ENCODE measurements at regions of chr19 and their contacts with region 1.

Region 1: GRCh38 chr19:51367565-51368365 is 1.0 kb downstream of the CLDND2 start:
- DNase-seq: peak; percentile 96 to 98
- ATAC-seq: peak; percentile 64 to 71
- H3K4me3 ChIP-seq: peak overlapping the region; percentile 88 to 95 (median 92)
- H3K27ac ChIP-seq: peak overlapping the region; percentile 91 to 98 (median 94)
- H3K4me1 ChIP-seq: peaks cover 8 to 19% of the 10 kb centered on the region in 2 donors
- H3K27me3 ChIP-seq: no peaks in the 10 kb centered on the region
- CTCF ChIP-seq: no peak
- POLR2A ChIP-seq: no peak

Region 2: GRCh38 chr19:49766007-49766937 is 1601.5 kb before region 1 on chr19:
- in situ Hi-C with region 1: no loop called
- intact Hi-C with region 1: loop called (anchors 5 kb)
- DNase-seq: peak; percentile 100
- ATAC-seq: peak; percentile 87 to 92
- H3K4me3 ChIP-seq: peak overlapping the region; percentile 48 to 97 (median 74)
- H3K27ac ChIP-seq: peak overlapping the region; percentile 91 to 98 (median 96)
- H3K4me1 ChIP-seq: peaks cover 19 to 22% of the 10 kb centered on the region in 2 donors
- H3K27me3 ChIP-seq: no peaks in the 10 kb centered on the region
- CTCF ChIP-seq: no peak
- POLR2A ChIP-seq: peak; percentile 71 to 75

Region 3: DNA sequence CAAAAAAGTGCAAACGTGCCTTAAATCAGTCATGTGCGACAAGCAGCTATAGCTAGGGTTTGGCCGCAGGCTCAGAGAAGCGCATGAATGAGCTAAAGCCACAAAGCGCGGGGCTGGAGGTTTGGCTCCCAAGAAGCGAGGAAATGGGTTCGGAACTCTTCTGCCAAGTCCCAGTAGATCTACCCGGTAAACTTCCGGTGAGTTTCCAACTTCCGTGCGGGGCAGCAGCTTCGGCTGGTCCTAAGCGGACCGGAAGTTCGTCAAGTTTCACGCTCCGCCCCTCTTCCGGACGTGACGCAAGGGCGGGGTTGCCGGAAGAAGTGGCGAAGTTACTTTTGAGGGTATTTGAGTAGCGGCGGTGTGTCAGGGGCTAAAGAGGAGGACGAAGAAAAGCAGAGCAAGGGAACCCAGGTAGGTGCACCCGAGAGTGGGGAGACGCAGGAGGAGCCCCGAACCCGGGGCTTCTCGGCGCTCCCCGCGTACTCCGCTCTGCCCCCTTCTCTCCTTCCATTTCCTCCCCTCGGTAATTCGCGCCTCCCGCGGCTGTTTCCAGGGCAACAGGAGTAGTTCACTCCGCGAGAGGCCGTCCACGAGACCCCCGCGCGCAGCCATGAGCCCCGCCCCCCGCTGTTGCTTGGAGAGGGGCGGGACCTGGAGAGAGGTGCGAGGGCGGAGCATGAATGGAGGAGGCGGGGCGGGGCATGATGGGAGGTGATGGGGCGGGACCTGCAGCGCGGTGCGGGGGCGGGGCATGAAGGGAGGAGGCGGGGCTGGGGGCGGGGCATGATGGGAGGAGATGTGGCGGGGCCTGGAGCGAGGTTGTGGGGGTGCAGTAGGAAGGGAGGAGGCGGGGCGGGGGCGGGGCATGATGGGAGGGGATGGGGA is 991.4 kb before region 1 on chr19 and contains the start of gene NR1H2:
- in situ Hi-C with region 1: no loop called
- intact Hi-C with region 1: loop called (anchors 5 kb)
- DNase-seq: peak; percentile 93 to 94
- ATAC-seq: peak; percentile 98
- H3K4me3 ChIP-seq: peak within 1 kb of the TSS; percentile 71 to 99 (median 96)
- H3K27ac ChIP-seq: peak within 1 kb of the TSS; percentile 95 to 100 (median 99)
- H3K4me1 ChIP-seq: peaks cover 8 to 12% of the 10 kb centered on the region in 2 donors
- H3K27me3 ChIP-seq: no peaks in the 10 kb centered on the region
- CTCF ChIP-seq: no peak
- POLR2A ChIP-seq: peak; percentile 76 to 83
- total RNA-seq, gene NR1H2: 155 to 232 (median 200) TPM

Region 4: GRCh38 chr19:50804420-50805272 is 563.1 kb before region 1 on chr19:
- in situ Hi-C with region 1: no loop called
- intact Hi-C with region 1: loop called (anchors 2 kb)
- DNase-seq: peak; percentile 96 to 98
- ATAC-seq: peak; percentile 98
- H3K4me3 ChIP-seq: peak overlapping the region; percentile 82 to 100 (median 84)
- H3K27ac ChIP-seq: peak overlapping the region; percentile 92 to 100 (median 94)
- H3K4me1 ChIP-seq: peaks cover 15 to 23% of the 10 kb centered on the region in 2 donors
- H3K27me3 ChIP-seq: no peaks in the 10 kb centered on the region
- CTCF ChIP-seq: peak in 1 of 5 experiments; percentile 16
- POLR2A ChIP-seq: peak; percentile 56 to 60

Region 5: DNA sequence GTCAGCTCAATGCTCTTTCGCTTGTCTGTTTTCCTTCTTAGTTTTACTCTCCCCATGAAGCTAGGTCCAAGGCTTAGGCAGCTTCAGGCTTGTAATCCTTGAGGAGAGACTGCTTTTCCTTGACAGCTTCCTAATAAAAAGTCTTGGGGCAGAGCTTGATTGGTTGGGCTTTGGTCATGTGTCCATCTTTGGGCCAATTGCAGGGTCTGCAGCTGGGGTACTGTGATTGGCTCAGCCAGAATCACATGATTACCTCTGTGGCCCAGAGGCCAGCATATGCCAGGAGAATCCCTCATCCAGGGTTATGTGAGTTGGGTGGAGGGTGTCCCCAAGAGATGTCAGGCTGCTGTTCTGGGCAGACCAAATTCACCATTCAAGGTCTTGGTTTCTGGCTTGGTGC is 552.3 kb before region 1 on chr19:
- in situ Hi-C with region 1: no loop called
- intact Hi-C with region 1: no loop called
- DNase-seq: no peak
- ATAC-seq: no peak
- H3K4me3 ChIP-seq: no peak overlapping the region
- H3K27ac ChIP-seq: no peak overlapping the region
- H3K4me1 ChIP-seq: no peaks in the 10 kb centered on the region
- H3K27me3 ChIP-seq: peaks cover 23 to 36% (median 35%) of the 10 kb centered on the region in 3 donors
- CTCF ChIP-seq: no peak
- POLR2A ChIP-seq: no peak

Region 6: DNA sequence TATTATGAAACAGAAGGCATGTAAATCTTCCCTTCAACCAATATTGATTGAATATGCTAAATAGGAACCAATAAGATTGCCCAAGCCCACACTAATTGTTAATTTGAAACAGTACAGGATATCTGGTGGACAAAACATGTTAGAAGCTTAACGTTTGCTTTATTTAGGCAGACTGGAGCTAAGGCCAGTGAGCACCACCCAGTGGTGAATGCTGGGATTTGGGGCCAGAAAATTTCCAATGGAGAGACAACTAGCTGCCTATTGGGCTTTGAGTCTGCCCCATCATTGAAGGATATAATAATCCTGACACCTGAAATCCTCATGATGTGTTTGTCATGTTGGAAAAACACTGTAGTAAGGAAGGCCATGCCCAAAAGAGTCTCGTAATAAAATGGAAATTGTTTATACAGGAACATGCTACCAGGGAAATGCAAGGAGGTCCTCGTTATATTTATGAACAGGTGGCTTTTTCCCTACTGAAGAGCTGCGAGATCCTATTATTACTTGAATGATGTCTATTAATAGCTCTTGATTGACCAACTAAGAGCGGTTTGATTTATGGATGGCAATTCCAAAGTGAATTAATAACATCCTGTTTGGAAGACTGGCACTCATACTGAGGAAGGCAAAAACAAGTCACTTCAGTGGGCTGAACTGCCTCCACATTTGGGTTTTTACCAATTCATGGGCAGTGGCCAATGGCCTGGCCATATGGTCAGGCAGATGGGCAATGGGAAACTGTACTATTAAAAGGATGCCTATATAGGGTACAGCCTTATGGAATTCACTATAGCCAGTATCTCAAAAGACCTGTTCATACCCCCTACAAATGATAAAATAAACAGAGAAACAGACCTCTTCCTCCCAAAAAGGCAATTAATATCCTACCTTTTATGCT is 108.2 kb before region 1 on chr19:
- in situ Hi-C with region 1: no loop called
- intact Hi-C with region 1: no loop called
- DNase-seq: no peak
- ATAC-seq: no peak
- H3K4me3 ChIP-seq: no peak overlapping the region
- H3K27ac ChIP-seq: no peak overlapping the region
- H3K4me1 ChIP-seq: no peaks in the 10 kb centered on the region
- H3K27me3 ChIP-seq: no peaks in the 10 kb centered on the region
- CTCF ChIP-seq: no peak
- POLR2A ChIP-seq: no peak

Region 7: DNA sequence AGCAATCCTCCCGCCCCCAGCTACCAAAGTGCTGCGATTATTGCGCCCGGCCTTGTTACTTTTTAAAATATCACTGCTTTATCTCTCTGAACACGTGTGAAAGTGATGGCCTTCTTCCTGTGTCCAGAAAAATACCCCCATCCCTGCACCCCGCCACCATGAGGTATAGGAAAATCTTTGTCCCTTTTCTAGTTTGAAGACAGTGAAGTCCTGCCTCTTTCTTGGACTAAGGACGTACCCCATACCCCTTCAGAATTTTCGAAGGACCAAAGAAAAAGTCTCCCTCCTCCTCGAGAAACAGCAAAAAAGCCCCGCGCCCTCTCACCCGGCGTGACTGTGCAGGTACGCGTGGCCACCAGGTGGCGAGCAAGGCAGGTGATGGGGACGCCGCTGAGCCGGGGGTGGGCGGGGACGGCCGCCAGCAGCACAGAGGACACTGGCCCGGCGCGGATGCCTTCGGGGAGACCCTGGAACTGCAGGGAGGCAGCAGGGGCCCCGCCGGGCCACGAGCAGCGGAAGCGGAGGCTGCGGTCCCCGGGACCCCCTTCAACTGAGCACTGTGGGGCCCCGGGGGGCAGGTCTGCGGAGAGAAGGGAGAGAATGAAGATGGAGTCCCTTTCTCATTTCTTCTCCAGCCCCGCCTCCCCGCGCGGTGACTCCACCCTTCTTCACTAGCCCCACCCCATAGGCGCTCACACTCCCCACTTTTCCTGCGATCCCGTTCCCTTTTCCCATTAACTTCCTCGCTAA is 29.0 kb before region 1 on chr19:
- in situ Hi-C with region 1: no loop called
- intact Hi-C with region 1: loop called (anchors 1 kb)
- DNase-seq: peak; percentile 36 to 48
- ATAC-seq: peak; percentile 47 to 54
- H3K4me3 ChIP-seq: peak overlapping the region; percentile 49 to 60 (median 55)
- H3K27ac ChIP-seq: peak overlapping the region in 2 of 4 donors; percentile 39 to 59
- H3K4me1 ChIP-seq: peaks cover 4 to 17% of the 10 kb centered on the region in 2 donors
- H3K27me3 ChIP-seq: peaks cover 0 to 9% (median 0%) of the 10 kb centered on the region in 3 donors
- CTCF ChIP-seq: peak; percentile 45 to 92 (median 85)
- POLR2A ChIP-seq: no peak

Region 8: GRCh38 chr19:51439021-51439465 is 71.3 kb after region 1 on chr19:
- in situ Hi-C with region 1: no loop called
- intact Hi-C with region 1: no loop called
- DNase-seq: no peak
- ATAC-seq: no peak
- H3K4me3 ChIP-seq: no peak overlapping the region
- H3K27ac ChIP-seq: no peak overlapping the region
- H3K4me1 ChIP-seq: no peaks in the 10 kb centered on the region
- H3K27me3 ChIP-seq: peaks cover 0 to 6% (median 2%) of the 10 kb centered on the region in 3 donors
- CTCF ChIP-seq: no peak
- POLR2A ChIP-seq: no peak

Region 9: DNA sequence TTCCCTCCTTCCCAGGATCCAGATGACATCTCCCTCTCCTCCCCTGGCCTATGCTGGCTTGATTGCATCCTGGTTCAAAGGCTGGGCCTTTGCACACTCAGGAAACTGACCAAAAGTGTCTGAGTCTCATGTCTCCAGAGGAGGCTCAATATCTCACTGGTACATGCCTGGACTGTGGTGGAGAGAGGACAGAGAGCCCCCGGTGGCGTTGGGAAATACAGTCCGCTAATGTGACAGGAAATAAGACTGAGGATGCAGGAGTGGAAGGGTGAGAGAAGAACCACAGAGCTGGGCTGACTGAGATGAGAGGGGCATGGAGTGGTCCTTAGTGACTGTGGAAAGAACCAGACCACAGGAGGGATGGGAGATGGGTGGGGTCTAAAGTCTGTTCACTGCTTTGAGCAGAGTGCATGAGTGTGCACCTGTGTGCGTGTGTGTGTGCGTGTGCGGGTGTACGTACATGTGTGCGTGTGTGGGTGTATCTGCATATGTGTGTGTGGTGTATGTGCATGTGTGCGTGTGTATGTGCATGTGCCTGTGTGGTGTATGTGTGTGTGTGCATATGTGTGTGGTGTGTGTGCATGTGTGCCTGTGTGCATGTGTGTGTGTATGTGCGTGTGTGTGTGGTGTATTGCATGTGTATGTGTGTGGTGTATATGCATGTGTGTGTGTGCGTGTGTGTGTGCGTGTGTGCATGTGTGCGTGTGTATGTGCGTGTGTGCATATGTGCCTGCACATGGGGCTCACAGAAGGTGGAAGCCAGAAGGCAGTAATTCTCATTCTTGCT is 260.6 kb after region 1 on chr19:
- in situ Hi-C with region 1: no loop called
- intact Hi-C with region 1: no loop called
- DNase-seq: no peak
- ATAC-seq: no peak
- H3K4me3 ChIP-seq: no peak overlapping the region
- H3K27ac ChIP-seq: no peak overlapping the region
- H3K4me1 ChIP-seq: no peaks in the 10 kb centered on the region
- H3K27me3 ChIP-seq: no peaks in the 10 kb centered on the region
- CTCF ChIP-seq: no peak
- POLR2A ChIP-seq: no peak

Region 10: DNA sequence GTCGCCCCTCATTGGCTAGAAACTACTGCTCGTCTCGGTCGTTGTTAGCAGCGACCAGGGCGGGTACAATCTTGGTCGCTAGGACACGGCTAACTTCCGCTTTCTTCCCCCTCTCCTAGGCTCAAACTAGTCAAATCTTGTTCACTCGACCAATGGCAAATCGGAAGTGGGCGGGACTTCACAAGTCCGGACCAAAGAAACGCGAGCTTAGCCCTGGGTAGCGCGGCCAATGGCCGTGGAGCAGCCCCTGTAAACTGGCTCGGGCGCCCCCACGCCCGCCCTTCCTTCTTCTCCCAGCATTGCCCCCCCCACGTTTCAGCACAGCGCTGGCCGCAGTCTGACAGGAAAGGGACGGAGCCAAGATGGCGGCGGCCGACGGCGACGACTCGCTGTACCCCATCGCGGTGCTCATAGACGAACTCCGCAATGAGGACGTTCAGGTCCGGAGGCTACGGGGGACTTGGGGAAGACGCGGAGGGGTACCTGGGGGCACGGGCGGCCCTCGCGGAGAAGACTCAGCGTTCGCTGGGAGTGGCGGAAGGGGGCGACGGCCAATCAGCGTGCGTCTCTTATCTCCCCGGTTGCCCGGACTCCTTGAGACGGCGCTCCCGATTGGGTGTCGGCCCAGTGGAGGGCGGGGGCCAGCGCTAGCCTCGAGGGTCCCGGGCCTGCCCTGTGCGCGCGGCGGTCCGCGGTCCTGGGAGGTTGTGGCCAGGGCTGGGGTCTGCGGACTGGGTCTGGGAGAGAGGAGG is 822.1 kb after region 1 on chr19 and contains the start of gene PPP2R1A:
- in situ Hi-C with region 1: no loop called
- intact Hi-C with region 1: loop called (anchors 2 kb)
- DNase-seq: peak; percentile 100
- ATAC-seq: peak; percentile 90 to 95
- H3K4me3 ChIP-seq: peak within 1 kb of the TSS; percentile 68 to 99 (median 88)
- H3K27ac ChIP-seq: peak within 1 kb of the TSS; percentile 92 to 99 (median 94)
- H3K4me1 ChIP-seq: peaks cover 47 to 53% of the 10 kb centered on the region in 2 donors
- H3K27me3 ChIP-seq: no peaks in the 10 kb centered on the region
- CTCF ChIP-seq: no peak
- POLR2A ChIP-seq: peak; percentile 88 to 95
- total RNA-seq, gene PPP2R1A: 263 to 302 (median 290) TPM

Measured in gastrocnemius medialis (tissue), 4 donors.